WTC11 (cell line): ENCODE measurements at regions of chr11 and their contacts with region 1.

Region 1: GRCh38 chr11:134050541-134051383 is 18.1 kb upstream of the JAM3 start:
- DNase-seq: peak; percentile 69
- ATAC-seq: peak; percentile 35
- H3K4me3 Mint-ChIP-seq: peak overlapping the region; percentile 24
- H3K27ac Mint-ChIP-seq: no peak overlapping the region
- H3K4me1 Mint-ChIP-seq: peaks cover 58% of the 10 kb centered on the region
- H3K27me3 Mint-ChIP-seq: peaks cover 7% of the 10 kb centered on the region
- CTCF ChIP-seq: peak; percentile 87

Region 2: DNA sequence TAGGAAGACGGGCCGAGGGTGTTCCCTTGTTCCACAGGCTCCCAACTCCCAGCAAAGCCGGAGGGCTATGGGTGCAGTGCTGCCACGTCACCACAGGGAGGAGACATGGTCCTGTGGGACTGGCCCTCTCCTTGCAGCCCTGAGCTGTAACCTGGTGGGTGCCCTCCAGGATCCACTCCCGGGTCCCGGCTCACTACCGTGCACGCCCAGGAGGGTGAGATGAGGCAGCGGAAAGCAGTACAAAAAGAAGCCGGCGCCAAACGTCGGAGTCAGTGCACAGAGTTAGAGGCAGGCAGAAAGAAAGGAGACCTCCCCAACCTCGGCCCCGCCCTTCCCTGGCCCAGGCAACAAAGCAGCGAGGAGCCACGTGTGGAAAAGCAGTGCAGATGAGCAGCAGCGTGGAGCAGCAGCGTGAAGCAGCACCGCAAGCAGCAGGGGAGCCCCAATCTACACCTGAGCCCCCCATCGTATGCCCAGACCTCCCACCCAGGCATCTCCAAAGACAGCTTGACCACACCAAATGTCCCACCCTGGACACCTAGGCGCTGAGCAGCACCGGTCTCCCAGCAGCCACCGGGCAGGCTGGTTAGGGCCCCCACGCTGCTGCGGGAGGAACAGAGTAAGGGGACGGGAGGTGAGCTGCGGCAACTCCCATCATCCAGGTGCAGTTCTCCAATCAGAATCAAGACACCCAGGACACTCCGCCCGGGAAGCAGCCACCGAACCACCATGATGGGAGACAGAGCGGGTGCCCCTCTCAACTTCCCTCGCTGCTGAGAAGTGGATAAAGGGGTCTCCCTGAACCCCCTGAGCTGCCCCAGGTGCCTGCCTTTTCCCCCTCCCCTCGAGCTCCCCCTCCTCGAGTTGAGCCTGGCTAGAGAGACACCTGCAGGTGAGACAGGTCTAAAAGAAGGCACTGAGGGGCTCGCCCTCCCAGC is 122.8 kb before region 1 on chr11:
- CTCF ChIA-PET with region 1: interaction called, 37 read pairs
- POLR2A ChIA-PET with region 1: interaction called, 3 read pairs
- DNase-seq: peak; percentile 83
- ATAC-seq: peak; percentile 85
- H3K4me3 Mint-ChIP-seq: no peak overlapping the region
- H3K27ac Mint-ChIP-seq: peak overlapping the region; percentile 68
- H3K4me1 Mint-ChIP-seq: peaks cover 7% of the 10 kb centered on the region
- H3K27me3 Mint-ChIP-seq: no peaks in the 10 kb centered on the region
- CTCF ChIP-seq: peak; percentile 71

Region 3: GRCh38 chr11:134026655-134027343 is 24.0 kb before region 1 on chr11:
- CTCF ChIA-PET with region 1: interaction called, 125 read pairs
- POLR2A ChIA-PET with region 1: no interaction called
- DNase-seq: peak; percentile 47
- ATAC-seq: peak; percentile 62
- H3K4me3 Mint-ChIP-seq: no peak overlapping the region
- H3K27ac Mint-ChIP-seq: no peak overlapping the region
- H3K4me1 Mint-ChIP-seq: peaks cover 21% of the 10 kb centered on the region
- H3K27me3 Mint-ChIP-seq: peaks cover 26% of the 10 kb centered on the region
- CTCF ChIP-seq: no peak

Region 4: GRCh38 chr11:134040386-134041302 is 10.1 kb before region 1 on chr11:
- CTCF ChIA-PET with region 1: interaction called, 30 read pairs
- POLR2A ChIA-PET with region 1: interaction called, 3 read pairs
- DNase-seq: no peak
- ATAC-seq: no peak
- H3K4me3 Mint-ChIP-seq: no peak overlapping the region
- H3K27ac Mint-ChIP-seq: peak overlapping the region; percentile 81; the same call in 1 of the 2 replicates
- H3K4me1 Mint-ChIP-seq: peaks cover 28% of the 10 kb centered on the region
- H3K27me3 Mint-ChIP-seq: no peaks in the 10 kb centered on the region; the same call in 1 of the 2 replicates
- CTCF ChIP-seq: no peak

Region 5: GRCh38 chr11:134098566-134099184 is 47.9 kb after region 1 on chr11:
- CTCF ChIA-PET with region 1: interaction called, 57 read pairs
- POLR2A ChIA-PET with region 1: no interaction called
- DNase-seq: no peak
- ATAC-seq: peak; percentile 98
- H3K4me3 Mint-ChIP-seq: no peak overlapping the region
- H3K27ac Mint-ChIP-seq: 0 out of 2 replicates have a peak overlapping the region, but pooled peaks have one; percentile 50
- H3K4me1 Mint-ChIP-seq: peaks cover 23% of the 10 kb centered on the region
- H3K27me3 Mint-ChIP-seq: peaks cover 8% of the 10 kb centered on the region
- CTCF ChIP-seq: no peak

Region 6: DNA sequence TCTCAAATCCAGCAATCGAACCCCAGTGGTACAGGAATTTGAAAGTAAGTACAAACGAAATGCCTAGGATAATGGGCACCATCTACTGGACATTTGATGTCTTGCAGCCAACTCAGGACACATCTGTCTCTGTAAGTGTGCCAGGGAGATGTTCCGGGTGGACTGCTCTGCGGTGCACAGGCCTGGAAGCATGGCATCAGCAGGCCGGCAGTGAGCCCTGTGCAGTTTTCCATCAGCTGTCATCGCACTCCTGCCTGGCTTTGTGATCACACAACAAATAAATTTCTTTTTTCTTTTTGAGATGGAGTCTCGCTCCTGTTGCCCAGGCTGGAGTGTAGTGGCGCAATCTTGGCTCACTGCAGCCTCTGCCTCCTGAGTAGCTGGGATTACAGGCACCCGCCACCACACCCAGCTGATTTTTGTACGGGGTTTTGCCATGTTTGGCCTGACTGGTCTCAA is 89.1 kb after region 1 on chr11:
- CTCF ChIA-PET with region 1: interaction called, 13 read pairs
- POLR2A ChIA-PET with region 1: no interaction called
- DNase-seq: peak; percentile 70
- ATAC-seq: peak; percentile 94
- H3K4me3 Mint-ChIP-seq: no peak overlapping the region
- H3K27ac Mint-ChIP-seq: no peak overlapping the region
- H3K4me1 Mint-ChIP-seq: peaks cover 10% of the 10 kb centered on the region
- H3K27me3 Mint-ChIP-seq: no peaks in the 10 kb centered on the region
- CTCF ChIP-seq: peak; percentile 68

Region 7: GRCh38 chr11:134196756-134197155 is 146.0 kb after region 1 on chr11:
- CTCF ChIA-PET with region 1: no interaction called
- POLR2A ChIA-PET with region 1: no interaction called
- DNase-seq: no peak
- ATAC-seq: no peak
- H3K4me3 Mint-ChIP-seq: no peak overlapping the region
- H3K27ac Mint-ChIP-seq: no peak overlapping the region
- H3K4me1 Mint-ChIP-seq: peaks cover 11% of the 10 kb centered on the region
- H3K27me3 Mint-ChIP-seq: no peaks in the 10 kb centered on the region
- CTCF ChIP-seq: no peak

Region 8: GRCh38 chr11:134215836-134216235 is 165.1 kb after region 1 on chr11:
- CTCF ChIA-PET with region 1: no interaction called
- POLR2A ChIA-PET with region 1: no interaction called
- DNase-seq: no peak
- ATAC-seq: no peak
- H3K4me3 Mint-ChIP-seq: no peak overlapping the region
- H3K27ac Mint-ChIP-seq: no peak overlapping the region
- H3K4me1 Mint-ChIP-seq: no peaks in the 10 kb centered on the region
- H3K27me3 Mint-ChIP-seq: no peaks in the 10 kb centered on the region
- CTCF ChIP-seq: no peak

Region 9: DNA sequence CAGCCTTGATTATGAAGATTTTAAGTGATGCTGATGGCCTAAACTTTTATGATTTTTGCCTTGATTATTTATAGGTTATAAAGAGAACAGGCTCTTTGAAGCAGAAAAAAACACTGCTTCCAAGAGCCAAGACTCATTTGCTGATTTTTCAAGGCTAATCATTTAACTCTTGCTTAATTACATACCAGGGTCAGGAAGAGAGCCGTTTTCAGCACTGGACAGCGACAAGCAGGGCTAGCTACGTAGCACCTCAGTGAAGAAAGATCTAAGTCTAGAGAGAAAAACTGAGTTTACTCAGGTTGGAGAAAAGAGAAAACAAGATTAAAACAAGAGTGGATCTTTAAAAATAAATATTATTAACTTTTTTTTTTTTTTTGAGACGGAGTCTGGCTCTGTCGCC is 976.7 kb after region 1 on chr11:
- CTCF ChIA-PET with region 1: no interaction called
- POLR2A ChIA-PET with region 1: no interaction called
- DNase-seq: peak; percentile 70
- ATAC-seq: peak; percentile 73
- H3K4me3 Mint-ChIP-seq: no peak overlapping the region
- H3K27ac Mint-ChIP-seq: no peak overlapping the region
- H3K4me1 Mint-ChIP-seq: peaks cover 20% of the 10 kb centered on the region
- H3K27me3 Mint-ChIP-seq: peaks cover 4% of the 10 kb centered on the region; the same call in 1 of the 2 replicates
- CTCF ChIP-seq: no peak